Heart right ventricle (tissue), 16 donors: ENCODE measurements at regions of chr5 and their contacts with region 1.

Region 1: DNA sequence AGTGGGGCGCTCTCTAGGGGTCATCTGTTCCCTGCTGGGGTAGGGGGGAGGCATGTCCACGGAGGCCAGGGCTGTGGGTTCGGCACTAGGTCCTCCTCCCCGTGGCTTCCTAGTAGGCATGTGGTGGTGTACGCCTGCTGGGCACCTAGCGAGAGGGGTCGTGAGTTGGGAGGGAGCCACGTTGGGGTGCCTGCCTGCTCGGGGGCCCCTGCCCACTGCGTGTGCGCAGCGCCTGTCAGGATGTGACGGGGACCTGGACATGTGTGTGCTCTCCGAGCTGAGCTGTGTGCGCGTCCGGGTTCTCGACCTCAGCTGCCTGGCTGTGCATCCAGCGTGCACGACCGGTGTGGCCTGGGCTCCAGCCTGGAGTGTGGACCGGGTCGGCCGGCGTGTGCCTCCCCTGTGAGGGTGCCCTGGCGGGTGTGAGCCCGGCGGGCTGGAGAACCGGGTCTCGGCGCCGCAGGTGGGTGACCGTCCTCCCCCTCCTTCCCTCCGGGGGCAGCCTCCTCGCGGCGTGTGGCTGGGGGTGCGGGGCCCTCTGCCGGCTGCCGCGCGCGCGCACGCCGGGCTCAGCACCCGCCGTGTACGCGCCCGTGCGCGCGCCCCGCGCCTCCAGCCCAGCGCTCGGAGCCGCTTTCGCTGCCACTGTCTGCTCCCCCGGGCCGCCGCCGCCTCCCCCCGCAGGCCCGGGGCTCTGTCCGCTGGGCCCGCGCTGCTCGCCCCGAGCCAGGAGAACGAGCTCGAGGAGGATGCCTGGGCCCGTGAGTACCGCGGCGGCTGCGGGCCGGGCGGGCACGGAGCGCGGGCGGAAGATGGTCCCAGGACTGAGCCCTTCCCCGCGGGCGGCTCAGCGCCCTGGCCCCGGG is at the start of gene PRR7:
- DNase-seq: peak; percentile 31 to 64
- ATAC-seq: peak; percentile 46 to 76 (median 64)
- H3K4me3 ChIP-seq: peak within 1 kb of the TSS; percentile 50 to 74 (median 61)
- H3K27ac ChIP-seq: peak within 1 kb of the TSS in 5 of 10 donors; percentile 4 to 68 (median 51)
- H3K4me1 ChIP-seq: peaks cover 13 to 36% (median 25%) of the 10 kb centered on the region in 9 donors
- H3K27me3 ChIP-seq: peaks cover 0 to 47% (median 2%) of the 10 kb centered on the region in 7 donors
- CTCF ChIP-seq: peak in 1 of 9 donors; percentile 13
- total RNA-seq, gene PRR7: 0.97 to 2.9 (median 1.9) TPM

Region 2: DNA sequence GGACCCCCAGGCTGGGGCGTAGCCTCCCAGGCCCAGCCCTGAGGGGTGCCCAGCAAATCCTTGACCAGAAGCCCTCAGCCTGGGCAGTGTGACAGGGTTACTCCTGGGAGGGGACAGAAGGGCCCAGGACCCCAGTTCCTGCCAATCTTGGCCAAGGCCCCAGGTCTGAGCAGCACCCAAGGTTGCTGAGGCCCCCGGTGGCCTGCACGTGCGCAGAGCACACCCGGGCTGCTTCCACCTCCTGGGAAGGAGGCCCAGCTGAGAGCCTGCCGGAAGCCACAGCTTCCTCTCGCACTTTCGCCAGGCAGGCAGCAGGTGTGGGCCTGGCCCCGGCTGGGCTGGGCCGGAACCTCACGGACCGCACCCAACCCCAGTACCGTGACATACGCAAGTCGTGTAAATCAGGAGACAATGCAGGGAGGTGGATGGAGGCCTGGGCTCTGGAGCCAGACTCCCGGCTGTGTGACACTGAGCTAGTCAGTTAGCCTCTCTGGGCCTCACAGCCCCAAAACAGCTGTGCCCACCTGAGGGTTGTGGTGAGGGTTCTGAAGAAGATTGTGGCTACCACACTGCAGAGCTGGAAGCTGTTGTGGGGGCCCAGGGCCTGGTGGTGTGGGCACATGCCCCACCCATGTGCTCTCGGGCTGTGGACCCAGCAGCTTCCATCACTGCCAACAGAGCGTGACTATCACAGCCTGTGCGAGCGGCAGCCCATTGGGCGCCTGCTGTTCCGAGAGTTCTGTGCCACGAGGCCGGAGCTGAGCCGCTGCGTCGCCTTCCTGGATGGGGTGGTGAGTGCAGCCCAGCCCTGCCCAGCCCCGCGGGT is 14.9 kb before region 1 on chr5:
- intact Hi-C with region 1: loop called in 1 of 10 experiments (anchors 2 kb)
- DNase-seq: peak in 1 of 2 donors; percentile 44
- ATAC-seq: peak in 6 of 8 donors; percentile 6 to 34 (median 15)
- H3K4me3 ChIP-seq: peak overlapping the region in 1 of 10 donors; percentile 31
- H3K27ac ChIP-seq: peak overlapping the region in 6 of 10 donors; percentile 12 to 96 (median 38)
- H3K4me1 ChIP-seq: peaks cover 12 to 69% (median 38%) of the 10 kb centered on the region in 9 donors
- H3K27me3 ChIP-seq: no peaks in the 10 kb centered on the region
- CTCF ChIP-seq: no peak